Gastrocnemius medialis (tissue), 4 donors: ENCODE measurements at regions of chr13 and their contacts with region 1.

Region 1: GRCh38 chr13:22801402-22802003 is 379.3 kb upstream of the SGCG start:
- DNase-seq: no peak
- ATAC-seq: no peak
- H3K4me3 ChIP-seq: no peak overlapping the region
- H3K27ac ChIP-seq: no peak overlapping the region
- H3K4me1 ChIP-seq: no peaks in the 10 kb centered on the region
- H3K27me3 ChIP-seq: no peaks in the 10 kb centered on the region
- CTCF ChIP-seq: peak in 1 of 5 experiments; percentile 25
- POLR2A ChIP-seq: no peak

Region 2: DNA sequence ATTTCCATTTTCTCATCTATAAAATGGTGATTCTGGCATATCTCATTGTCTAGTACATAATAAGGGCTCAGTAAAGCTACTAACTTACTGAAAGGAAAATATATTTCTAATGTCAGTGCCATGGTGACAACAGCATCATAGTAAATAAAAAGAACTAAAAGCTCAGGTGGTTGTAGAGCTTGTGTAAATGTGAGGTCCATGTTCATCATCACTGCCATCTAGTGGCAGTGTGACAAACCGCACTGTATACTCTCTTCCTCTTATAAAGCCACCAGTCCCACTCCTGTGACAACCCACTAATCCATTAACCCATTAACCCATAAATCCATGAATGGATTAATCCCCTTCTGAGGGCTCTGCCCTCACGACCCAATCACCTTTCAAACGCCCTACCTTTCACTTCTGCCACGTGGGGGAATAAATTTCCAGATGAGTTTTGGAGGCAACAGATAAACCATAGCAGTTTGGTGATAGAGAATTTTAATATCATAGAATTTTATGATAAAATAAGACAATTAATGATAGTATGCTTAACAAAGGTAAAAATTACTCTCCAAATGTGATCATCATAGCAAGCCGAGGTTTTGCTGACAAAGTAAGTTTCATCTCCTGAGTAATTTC is 218.8 kb after region 1 on chr13:
- in situ Hi-C with region 1: loop called in 3 of 4 experiments (anchors 10 to 25 kb)
- intact Hi-C with region 1: loop called (anchors 2 kb)
- DNase-seq: peak in 1 of 2 donors; percentile 24
- ATAC-seq: peak; percentile 60 to 83
- H3K4me3 ChIP-seq: no peak overlapping the region
- H3K27ac ChIP-seq: no peak overlapping the region
- H3K4me1 ChIP-seq: no peaks in the 10 kb centered on the region
- H3K27me3 ChIP-seq: peaks cover 0 to 2% (median 0%) of the 10 kb centered on the region in 3 donors
- CTCF ChIP-seq: peak; percentile 25 to 76 (median 53)
- POLR2A ChIP-seq: no peak

Region 3: DNA sequence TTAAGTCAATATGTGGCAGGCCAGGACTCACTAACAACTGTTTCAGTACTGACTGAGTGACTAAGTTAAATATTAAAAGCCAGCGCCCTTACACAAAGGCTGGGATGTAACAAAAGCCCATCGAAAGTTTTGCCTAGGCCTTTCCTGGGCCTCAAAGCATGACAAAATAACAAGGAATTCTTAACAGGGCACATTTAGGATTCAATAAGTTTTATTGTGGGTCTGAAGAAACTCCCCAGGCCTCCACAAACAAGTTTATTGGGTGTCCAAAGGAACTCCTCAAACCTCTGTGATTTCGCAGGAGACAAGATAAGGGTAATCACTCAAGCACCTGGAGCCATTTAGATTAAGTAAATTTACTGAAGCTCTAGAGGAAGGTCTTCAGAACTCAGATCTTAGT is 248.6 kb after region 1 on chr13:
- in situ Hi-C with region 1: no loop called
- intact Hi-C with region 1: no loop called
- DNase-seq: no peak
- ATAC-seq: no peak
- H3K4me3 ChIP-seq: no peak overlapping the region
- H3K27ac ChIP-seq: no peak overlapping the region
- H3K4me1 ChIP-seq: no peaks in the 10 kb centered on the region
- H3K27me3 ChIP-seq: no peaks in the 10 kb centered on the region
- CTCF ChIP-seq: no peak
- POLR2A ChIP-seq: no peak

Region 4: GRCh38 chr13:23321535-23322241 is 520.2 kb after region 1 on chr13:
- in situ Hi-C with region 1: loop called in 3 of 4 experiments (anchors 25 kb)
- intact Hi-C with region 1: no loop called
- DNase-seq: peak; percentile 50 to 72
- ATAC-seq: peak; percentile 86 to 93
- H3K4me3 ChIP-seq: no peak overlapping the region
- H3K27ac ChIP-seq: peak overlapping the region; percentile 43 to 76 (median 52)
- H3K4me1 ChIP-seq: peaks cover 43 to 49% of the 10 kb centered on the region in 2 donors
- H3K27me3 ChIP-seq: no peaks in the 10 kb centered on the region
- CTCF ChIP-seq: no peak
- POLR2A ChIP-seq: no peak